Caco-2 (cell line): ENCODE measurements at regions of chr5 and their contacts with region 1.

Region 1: GRCh38 chr5:96336351-96336985 is 96.6 kb downstream of the PCSK1 start:
- DNase-seq: peak; percentile 78 to 79
- H3K4me3 ChIP-seq: no peak overlapping the region
- H3K4me3 Mint-ChIP-seq: no peak overlapping the region
- H3K27ac Mint-ChIP-seq: no peak overlapping the region
- H3K4me1 ChIP-seq: peaks cover 40% of the 10 kb centered on the region
- H3K4me1 Mint-ChIP-seq: peaks cover 39% of the 10 kb centered on the region
- H3K27me3 ChIP-seq: no peaks in the 10 kb centered on the region
- H3K27me3 Mint-ChIP-seq: no peaks in the 10 kb centered on the region
- CTCF ChIP-seq: peak; percentile 84 to 93

Region 2: GRCh38 chr5:95892780-95893354 is 443.6 kb before region 1 on chr5:
- CTCF ChIA-PET with region 1: interaction called, 6 read pairs
- POLR2A ChIA-PET with region 1: no interaction called
- intact Hi-C with region 1: loop called (anchors 1 kb)
- DNase-seq: peak; percentile 65 to 72
- H3K4me3 ChIP-seq: no peak overlapping the region
- H3K4me3 Mint-ChIP-seq: no peak overlapping the region
- H3K27ac Mint-ChIP-seq: no peak overlapping the region
- H3K4me1 ChIP-seq: peaks cover 5% of the 10 kb centered on the region
- H3K4me1 Mint-ChIP-seq: peaks cover 4% of the 10 kb centered on the region
- H3K27me3 ChIP-seq: no peaks in the 10 kb centered on the region
- H3K27me3 Mint-ChIP-seq: no peaks in the 10 kb centered on the region
- CTCF ChIP-seq: peak; percentile 61 to 75

Region 3: GRCh38 chr5:96067894-96068614 is 268.4 kb before region 1 on chr5:
- CTCF ChIA-PET with region 1: no interaction called
- POLR2A ChIA-PET with region 1: no interaction called
- intact Hi-C with region 1: loop called (anchors 5 kb)
- DNase-seq: peak; percentile 47 to 73
- H3K4me3 ChIP-seq: no peak overlapping the region
- H3K4me3 Mint-ChIP-seq: no peak overlapping the region
- H3K27ac Mint-ChIP-seq: peak overlapping the region; percentile 69
- H3K4me1 ChIP-seq: peaks cover 29% of the 10 kb centered on the region
- H3K4me1 Mint-ChIP-seq: peaks cover 34% of the 10 kb centered on the region
- H3K27me3 ChIP-seq: no peaks in the 10 kb centered on the region
- H3K27me3 Mint-ChIP-seq: no peaks in the 10 kb centered on the region
- CTCF ChIP-seq: no peak

Region 4: GRCh38 chr5:96256778-96257470 is 79.5 kb before region 1 on chr5:
- CTCF ChIA-PET with region 1: no interaction called
- POLR2A ChIA-PET with region 1: no interaction called
- intact Hi-C with region 1: loop called (anchors 2 kb)
- DNase-seq: peak; percentile 49 to 63
- H3K4me3 ChIP-seq: no peak overlapping the region
- H3K4me3 Mint-ChIP-seq: no peak overlapping the region
- H3K27ac Mint-ChIP-seq: no peak overlapping the region
- H3K4me1 ChIP-seq: peaks cover 6% of the 10 kb centered on the region; the same call in 1 of the 2 replicates
- H3K4me1 Mint-ChIP-seq: peaks cover 10% of the 10 kb centered on the region
- H3K27me3 ChIP-seq: no peaks in the 10 kb centered on the region
- H3K27me3 Mint-ChIP-seq: no peaks in the 10 kb centered on the region
- CTCF ChIP-seq: peak in 1 of 2 experiments; percentile 32

Region 5: GRCh38 chr5:96279801-96280542 is 56.5 kb before region 1 on chr5:
- CTCF ChIA-PET with region 1: no interaction called
- POLR2A ChIA-PET with region 1: no interaction called
- intact Hi-C with region 1: no loop called
- DNase-seq: no peak
- H3K4me3 ChIP-seq: no peak overlapping the region
- H3K4me3 Mint-ChIP-seq: no peak overlapping the region
- H3K27ac Mint-ChIP-seq: no peak overlapping the region
- H3K4me1 ChIP-seq: peaks cover 4% of the 10 kb centered on the region; the same call in 1 of the 2 replicates
- H3K4me1 Mint-ChIP-seq: no peaks in the 10 kb centered on the region
- H3K27me3 ChIP-seq: no peaks in the 10 kb centered on the region
- H3K27me3 Mint-ChIP-seq: no peaks in the 10 kb centered on the region
- CTCF ChIP-seq: no peak